Activated CD4-positive, alpha-beta memory T cell treated with anti-CD3 and anti-CD28 coated beads for 36 hours (primary cell): ENCODE measurements at regions of chr6 and their contacts with region 1.

Region 1: DNA sequence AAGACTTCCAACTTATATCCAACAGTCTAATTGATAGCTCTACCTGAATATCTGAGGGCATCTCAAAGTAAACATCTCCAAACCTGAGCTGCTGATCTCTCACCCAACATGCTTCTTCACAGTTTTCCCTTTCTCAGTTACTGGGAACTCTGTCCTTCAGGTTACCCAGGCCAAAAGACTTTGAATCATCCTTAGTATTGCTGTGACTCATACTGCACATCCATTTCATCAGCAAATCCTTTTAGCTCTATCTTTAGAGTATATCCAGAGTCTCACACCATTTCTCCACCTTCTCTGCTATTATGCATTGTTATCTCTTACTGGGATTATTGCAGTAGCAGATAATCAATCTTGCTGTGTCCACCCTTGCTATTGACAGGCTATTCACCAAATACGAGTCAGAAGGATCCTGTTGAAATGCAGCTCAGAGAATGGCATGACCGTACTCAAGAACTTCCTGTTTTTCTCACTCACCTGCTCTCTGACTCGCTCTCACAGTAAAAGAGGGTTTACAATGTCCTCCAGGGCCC is 57.3 kb downstream of the BCKDHB start:
- DNase-seq: peak; percentile 11
- H3K4me3 Mint-ChIP-seq: no peak overlapping the region
- H3K27ac Mint-ChIP-seq: no peak overlapping the region
- H3K4me1 Mint-ChIP-seq: peaks cover 14% of the 10 kb centered on the region
- H3K27me3 Mint-ChIP-seq: no peaks in the 10 kb centered on the region

Region 2: DNA sequence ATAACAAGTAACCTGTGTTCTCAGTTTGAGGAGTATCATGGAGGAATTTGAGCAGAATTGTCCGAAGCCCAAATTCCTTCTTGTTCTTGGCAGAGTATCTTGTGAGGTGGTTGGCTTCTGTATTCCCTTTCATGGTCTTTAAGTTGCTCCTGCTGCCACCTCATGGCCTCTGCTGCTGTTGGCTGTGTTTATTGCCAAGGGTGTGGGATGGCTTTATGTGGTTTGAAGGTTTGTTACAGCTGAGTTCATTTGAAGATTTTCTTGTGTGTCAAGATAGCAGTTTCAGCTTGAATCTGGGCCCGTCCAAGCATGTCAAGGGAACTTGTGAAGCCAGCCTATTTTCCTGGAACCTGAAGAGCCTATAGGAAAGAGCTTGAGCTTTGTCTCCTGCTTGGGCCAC is 179.5 kb before region 1 on chr6:
- CTCF ChIA-PET with region 1: no interaction called
- POLR2A ChIA-PET with region 1: no interaction called
- intact Hi-C with region 1: no loop called
- DNase-seq: peak; percentile 23
- H3K4me3 Mint-ChIP-seq: no peak overlapping the region
- H3K27ac Mint-ChIP-seq: no peak overlapping the region
- H3K4me1 Mint-ChIP-seq: no peaks in the 10 kb centered on the region
- H3K27me3 Mint-ChIP-seq: peaks cover 2% of the 10 kb centered on the region

Region 3: GRCh38 chr6:80004173-80005072 is 159.3 kb before region 1 on chr6 and contains the start of gene TTK:
- CTCF ChIA-PET with region 1: no interaction called
- POLR2A ChIA-PET with region 1: no interaction called
- intact Hi-C with region 1: loop called (anchors 1 kb)
- DNase-seq: peak; percentile 94
- H3K4me3 Mint-ChIP-seq: peak within 1 kb of the TSS; percentile 94
- H3K27ac Mint-ChIP-seq: peak within 1 kb of the TSS; percentile 86
- H3K4me1 Mint-ChIP-seq: peaks cover 28% of the 10 kb centered on the region
- H3K27me3 Mint-ChIP-seq: peaks cover 3% of the 10 kb centered on the region
- total RNA-seq, gene TTK: 37.2 to 39.4 TPM

Region 4: GRCh38 chr6:80106418-80107235 is 57.1 kb before region 1 on chr6 and contains the start of gene BCKDHB:
- CTCF ChIA-PET with region 1: interaction called, 5 read pairs
- POLR2A ChIA-PET with region 1: interaction called, 4 read pairs
- intact Hi-C with region 1: loop called (anchors 1 kb)
- DNase-seq: peak; percentile 99
- H3K4me3 Mint-ChIP-seq: peak within 1 kb of the TSS; percentile 94
- H3K27ac Mint-ChIP-seq: peak within 1 kb of the TSS; percentile 80
- H3K4me1 Mint-ChIP-seq: peaks cover 15% of the 10 kb centered on the region
- H3K27me3 Mint-ChIP-seq: no peaks in the 10 kb centered on the region
- total RNA-seq, gene BCKDHB: 16.4 to 17.7 TPM

Region 5: DNA sequence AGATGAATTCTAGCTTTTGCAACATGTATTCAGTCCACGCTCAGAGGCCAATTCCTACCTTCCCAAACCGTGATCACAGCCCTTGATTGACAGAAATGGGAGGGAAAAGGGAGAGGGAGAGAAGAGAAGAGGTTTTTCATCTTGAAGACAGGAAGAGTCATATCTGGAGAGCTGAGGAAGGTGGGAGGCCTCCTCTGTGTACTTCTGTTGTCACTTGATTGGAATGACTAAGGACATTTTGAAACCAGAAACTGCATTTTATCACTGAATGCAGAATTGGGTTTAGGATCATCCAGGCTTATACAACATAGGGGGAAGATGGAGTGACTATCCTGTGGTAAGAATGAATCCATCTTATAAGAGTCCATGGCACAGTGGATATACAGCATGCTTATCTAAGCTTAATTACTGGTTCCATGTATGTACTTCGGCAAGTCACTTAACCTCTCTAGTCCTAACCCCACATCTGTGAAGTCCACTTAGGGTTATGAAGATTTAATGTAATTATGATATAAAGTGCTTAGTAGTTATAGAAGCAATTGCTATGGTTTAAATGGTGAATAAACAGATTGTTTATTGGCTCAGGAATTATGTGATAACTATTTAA is 86.8 kb after region 1 on chr6:
- CTCF ChIA-PET with region 1: no interaction called
- POLR2A ChIA-PET with region 1: no interaction called
- intact Hi-C with region 1: loop called (anchors 2 kb)
- DNase-seq: peak; percentile 20
- H3K4me3 Mint-ChIP-seq: no peak overlapping the region
- H3K27ac Mint-ChIP-seq: no peak overlapping the region
- H3K4me1 Mint-ChIP-seq: peaks cover 9% of the 10 kb centered on the region
- H3K27me3 Mint-ChIP-seq: no peaks in the 10 kb centered on the region

Region 6: GRCh38 chr6:80280262-80281010 is 116.7 kb after region 1 on chr6:
- CTCF ChIA-PET with region 1: no interaction called
- POLR2A ChIA-PET with region 1: no interaction called
- intact Hi-C with region 1: loop called (anchors 1 kb)
- DNase-seq: peak; percentile 9
- H3K4me3 Mint-ChIP-seq: no peak overlapping the region
- H3K27ac Mint-ChIP-seq: no peak overlapping the region
- H3K4me1 Mint-ChIP-seq: peaks cover 11% of the 10 kb centered on the region
- H3K27me3 Mint-ChIP-seq: no peaks in the 10 kb centered on the region

Region 7: DNA sequence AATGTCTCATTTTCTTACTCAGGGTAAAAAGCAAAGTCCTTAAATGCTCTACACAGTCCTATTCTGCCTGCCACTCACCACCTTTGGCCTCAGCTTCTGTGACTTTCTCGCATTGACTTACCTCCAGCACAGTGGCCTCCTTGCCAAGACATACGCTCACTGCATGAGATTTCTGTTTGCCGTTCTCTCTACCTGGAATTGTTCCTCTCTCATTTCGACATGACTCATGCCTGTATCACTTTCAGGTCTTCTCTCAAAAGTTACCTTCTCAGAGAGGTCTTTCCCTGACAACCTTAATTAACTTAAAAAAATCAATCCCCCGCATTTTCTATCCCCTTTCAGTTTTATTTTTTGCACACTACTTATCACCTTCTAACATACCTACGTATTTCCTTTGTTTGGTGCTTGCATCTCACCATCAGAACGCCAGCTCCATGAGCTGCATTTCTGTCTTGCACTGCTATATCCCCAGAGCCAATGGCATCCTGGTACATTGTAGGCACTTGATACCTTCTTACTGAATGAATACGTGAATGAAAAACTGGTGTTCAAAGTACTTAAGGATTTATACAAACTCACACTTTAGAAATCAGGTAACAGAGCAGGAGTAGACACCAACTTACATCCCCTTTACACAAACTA is 1564.3 kb after region 1 on chr6:
- CTCF ChIA-PET with region 1: no interaction called
- POLR2A ChIA-PET with region 1: no interaction called
- intact Hi-C with region 1: loop called (anchors 2 kb)
- DNase-seq: peak; percentile 64
- H3K4me3 Mint-ChIP-seq: no peak overlapping the region
- H3K27ac Mint-ChIP-seq: peak overlapping the region; percentile 9
- H3K4me1 Mint-ChIP-seq: peaks cover 12% of the 10 kb centered on the region
- H3K27me3 Mint-ChIP-seq: no peaks in the 10 kb centered on the region